ENCODE measurements at regions of chr2 and their contacts with region 1.

Region 1: DNA sequence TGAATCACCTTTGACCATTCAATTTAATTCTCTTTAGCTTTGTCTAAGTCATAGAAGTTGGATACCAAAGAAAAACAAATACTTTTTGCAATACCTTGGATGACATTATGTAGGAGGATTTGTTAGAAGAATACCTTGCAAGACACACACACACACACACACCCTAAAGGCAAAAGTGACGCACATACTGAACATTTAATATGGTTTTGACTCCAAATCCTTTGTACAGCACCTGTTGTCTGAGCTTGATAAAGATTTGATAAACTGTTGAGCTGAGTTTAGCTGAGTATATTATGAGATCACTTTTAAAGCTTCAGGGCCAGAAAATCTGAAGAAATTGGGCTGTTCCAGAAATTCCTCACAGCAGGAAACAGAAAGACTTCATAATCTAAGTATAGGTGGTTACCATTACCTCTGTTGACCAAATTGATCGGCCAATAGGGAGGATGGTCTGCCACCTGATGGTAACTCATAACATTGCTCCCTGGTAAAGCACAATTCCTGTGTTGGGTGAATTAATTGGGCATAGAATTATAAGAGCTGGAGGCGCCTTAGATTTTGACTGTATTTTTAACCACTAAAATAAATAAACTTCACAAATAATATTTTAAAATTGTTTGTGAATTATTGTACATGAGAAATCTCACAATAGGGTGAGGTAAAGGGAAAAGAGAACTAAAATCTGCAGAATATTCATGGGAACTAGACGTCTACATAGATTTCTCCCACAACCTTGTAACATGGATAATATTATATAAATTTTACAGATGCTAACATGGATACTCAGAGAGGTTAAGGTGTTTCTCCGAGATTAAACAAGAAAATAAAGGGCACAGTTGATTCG is 21.9 kb upstream of the RPIA start:
- DNase-seq: peak; percentile 55
- H3K4me3 ChIP-seq: no peak overlapping the region
- H3K27ac ChIP-seq: no peak overlapping the region
- H3K4me1 ChIP-seq: no peaks in the 10 kb centered on the region
- H3K27me3 ChIP-seq: peaks cover 5 to 9% of the 10 kb centered on the region in 2 experiments
- CTCF ChIP-seq: peak; percentile 40 to 47
- POLR2A ChIP-seq: no peak

Region 2: DNA sequence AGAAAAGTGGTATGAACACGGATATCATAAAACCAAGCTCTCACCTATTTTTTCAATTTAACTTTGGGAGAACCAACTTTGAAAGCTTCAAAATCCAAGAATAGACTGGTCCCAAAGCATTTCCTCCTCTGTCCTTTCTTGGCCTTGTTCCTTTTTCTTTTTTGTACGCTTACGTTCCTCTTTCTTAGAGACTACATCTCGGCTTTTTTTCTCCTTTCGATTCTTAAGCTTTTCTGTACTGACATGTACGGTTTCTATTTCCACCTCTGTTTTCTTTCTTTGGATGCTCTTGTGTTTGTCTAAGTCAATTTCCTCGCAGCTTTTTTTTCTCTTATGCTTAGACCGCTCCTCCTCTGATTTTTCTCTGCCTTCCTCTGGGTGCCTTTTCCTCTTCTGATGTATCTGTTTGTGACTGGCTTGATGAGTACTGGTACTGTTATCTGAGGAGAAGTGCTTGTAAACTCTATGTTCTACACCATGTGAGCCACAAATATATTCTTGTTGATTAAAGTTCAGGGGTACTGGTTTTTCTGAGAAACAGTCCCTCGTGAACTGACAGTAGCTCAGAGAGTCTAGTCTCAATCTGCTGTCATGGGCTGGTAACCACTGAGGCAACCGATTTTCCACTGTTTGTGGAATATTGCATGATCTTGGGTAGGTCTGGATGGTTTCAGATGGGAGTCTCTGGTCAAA is 641.8 kb before region 1 on chr2:
- CTCF ChIA-PET with region 1: no interaction called
- POLR2A ChIA-PET with region 1: no interaction called
- dilution Hi-C with region 1: no loop called
- intact Hi-C with region 1: no loop called
- DNase-seq: no peak
- H3K4me3 ChIP-seq: no peak overlapping the region
- H3K27ac ChIP-seq: no peak overlapping the region
- H3K4me1 ChIP-seq: no peaks in the 10 kb centered on the region
- H3K27me3 ChIP-seq: no peaks in the 10 kb centered on the region
- CTCF ChIP-seq: no peak
- POLR2A ChIP-seq: no peak

Region 3: DNA sequence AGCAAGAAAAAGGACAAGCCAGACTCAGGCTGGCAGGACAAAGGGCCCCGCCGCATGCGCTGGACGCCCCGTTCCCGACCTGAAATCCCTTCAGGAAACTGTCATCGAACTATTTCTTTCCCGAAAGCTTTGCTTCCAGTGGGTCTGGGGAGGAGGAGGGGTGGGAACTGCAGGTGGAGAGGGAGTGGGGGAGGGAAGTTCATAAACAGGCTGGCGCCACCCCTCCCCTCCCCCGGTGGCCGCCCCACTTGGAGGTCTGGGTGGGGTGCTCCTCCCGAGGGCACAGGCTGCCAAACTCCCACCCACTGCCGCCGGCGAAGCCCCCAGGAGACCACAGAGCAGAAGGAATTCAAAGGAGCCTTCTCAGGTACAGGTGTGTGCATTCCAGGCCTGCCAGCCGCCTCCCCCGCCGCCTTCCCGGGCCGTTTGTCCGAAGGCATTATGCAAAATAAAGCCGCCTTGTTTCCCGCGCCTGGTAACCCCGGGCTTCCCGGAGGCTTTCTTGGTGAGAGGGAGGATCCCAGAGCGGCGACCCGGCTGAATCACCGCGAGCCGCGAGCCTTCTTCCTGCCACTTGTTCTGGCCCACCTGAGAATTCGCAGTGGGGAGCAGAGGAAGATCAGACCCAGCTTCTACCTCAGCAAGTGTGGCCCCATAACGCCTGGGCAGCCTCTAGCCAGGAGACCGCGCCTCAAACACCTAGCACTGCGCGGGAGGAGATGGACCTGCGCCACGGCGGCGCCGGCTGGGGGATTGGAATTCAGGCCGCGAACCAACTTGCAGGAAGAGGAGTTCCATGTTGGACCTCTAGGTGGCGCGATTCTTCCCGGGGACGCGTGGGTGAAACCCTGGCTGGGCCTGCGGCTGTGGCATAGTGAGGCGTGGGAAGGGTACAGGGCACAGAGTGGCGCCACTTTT is 319.0 kb before region 1 on chr2:
- CTCF ChIA-PET with region 1: no interaction called
- POLR2A ChIA-PET with region 1: no interaction called
- dilution Hi-C with region 1: no loop called
- intact Hi-C with region 1: loop called (anchors 5 kb)
- DNase-seq: peak; percentile 19
- H3K4me3 ChIP-seq: no peak overlapping the region
- H3K27ac ChIP-seq: no peak overlapping the region
- H3K4me1 ChIP-seq: no peaks in the 10 kb centered on the region
- H3K27me3 ChIP-seq: no peaks in the 10 kb centered on the region
- CTCF ChIP-seq: peak; percentile 46 to 68
- POLR2A ChIP-seq: no peak

Region 4: GRCh38 chr2:88590998-88591613 is 78.5 kb before region 1 on chr2:
- CTCF ChIA-PET with region 1: interaction called, 378 read pairs
- POLR2A ChIA-PET with region 1: no interaction called
- dilution Hi-C with region 1: no loop called
- intact Hi-C with region 1: loop called (anchors 1 kb)
- DNase-seq: peak; percentile 77
- H3K4me3 ChIP-seq: no peak overlapping the region
- H3K27ac ChIP-seq: no peak overlapping the region
- H3K4me1 ChIP-seq: no peaks in the 10 kb centered on the region
- H3K27me3 ChIP-seq: no peaks in the 10 kb centered on the region
- CTCF ChIP-seq: peak; percentile 63
- POLR2A ChIP-seq: no peak

Region 5: GRCh38 chr2:88606371-88607030 is 63.1 kb before region 1 on chr2:
- CTCF ChIA-PET with region 1: interaction called, 22 read pairs
- POLR2A ChIA-PET with region 1: no interaction called
- dilution Hi-C with region 1: no loop called
- intact Hi-C with region 1: no loop called
- DNase-seq: no peak
- H3K4me3 ChIP-seq: no peak overlapping the region
- H3K27ac ChIP-seq: no peak overlapping the region
- H3K4me1 ChIP-seq: peaks cover 13% of the 10 kb centered on the region
- H3K27me3 ChIP-seq: no peaks in the 10 kb centered on the region
- CTCF ChIP-seq: no peak
- POLR2A ChIP-seq: no peak

Region 6: GRCh38 chr2:88659538-88659916 is 10.1 kb before region 1 on chr2:
- CTCF ChIA-PET with region 1: interaction called, 49 read pairs
- POLR2A ChIA-PET with region 1: no interaction called
- dilution Hi-C with region 1: no loop called
- intact Hi-C with region 1: no loop called
- DNase-seq: peak; percentile 88
- H3K4me3 ChIP-seq: peak overlapping the region in 1 of 3 experiments; percentile 4
- H3K27ac ChIP-seq: peak overlapping the region; percentile 37
- H3K4me1 ChIP-seq: peaks cover 11% of the 10 kb centered on the region
- H3K27me3 ChIP-seq: no peaks in the 10 kb centered on the region
- CTCF ChIP-seq: no peak
- POLR2A ChIP-seq: no peak

Region 7: DNA sequence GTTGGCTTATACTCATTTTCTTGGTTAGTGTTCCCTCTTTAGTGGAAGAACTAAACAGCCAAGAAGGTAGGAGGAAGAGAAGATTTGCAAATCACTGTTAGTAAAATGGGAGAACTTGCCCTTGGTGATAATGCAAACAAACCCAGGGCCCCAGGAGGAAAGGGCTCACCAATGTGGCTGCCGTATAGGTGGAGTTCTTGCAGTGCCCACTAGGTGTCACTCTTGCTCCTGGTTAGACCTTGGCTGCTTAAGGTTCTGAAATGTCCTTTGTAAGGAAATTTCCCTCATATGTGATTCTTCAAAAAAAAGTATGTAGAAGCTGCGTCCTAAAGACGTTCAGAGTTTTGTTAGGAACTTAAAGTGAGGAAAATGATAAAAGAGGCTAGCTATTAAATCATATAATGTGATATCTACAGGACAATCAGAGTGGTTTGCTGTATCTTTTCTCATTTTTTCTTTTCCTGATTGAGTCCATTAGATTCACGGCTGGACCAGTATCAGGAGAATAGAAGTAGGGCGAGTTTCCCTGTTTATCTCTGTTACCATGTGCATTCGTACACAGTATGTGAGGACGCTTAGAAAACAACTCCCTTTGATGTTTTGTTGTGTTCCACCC is 70.5 kb after region 1 on chr2:
- CTCF ChIA-PET with region 1: interaction called, 10 read pairs
- POLR2A ChIA-PET with region 1: no interaction called
- dilution Hi-C with region 1: no loop called
- intact Hi-C with region 1: no loop called
- DNase-seq: peak; percentile 82
- H3K4me3 ChIP-seq: no peak overlapping the region
- H3K27ac ChIP-seq: peak overlapping the region; percentile 16
- H3K4me1 ChIP-seq: peaks cover 31% of the 10 kb centered on the region
- H3K27me3 ChIP-seq: no peaks in the 10 kb centered on the region
- CTCF ChIP-seq: peak; percentile 85 to 87
- POLR2A ChIP-seq: no peak

Region 8: DNA sequence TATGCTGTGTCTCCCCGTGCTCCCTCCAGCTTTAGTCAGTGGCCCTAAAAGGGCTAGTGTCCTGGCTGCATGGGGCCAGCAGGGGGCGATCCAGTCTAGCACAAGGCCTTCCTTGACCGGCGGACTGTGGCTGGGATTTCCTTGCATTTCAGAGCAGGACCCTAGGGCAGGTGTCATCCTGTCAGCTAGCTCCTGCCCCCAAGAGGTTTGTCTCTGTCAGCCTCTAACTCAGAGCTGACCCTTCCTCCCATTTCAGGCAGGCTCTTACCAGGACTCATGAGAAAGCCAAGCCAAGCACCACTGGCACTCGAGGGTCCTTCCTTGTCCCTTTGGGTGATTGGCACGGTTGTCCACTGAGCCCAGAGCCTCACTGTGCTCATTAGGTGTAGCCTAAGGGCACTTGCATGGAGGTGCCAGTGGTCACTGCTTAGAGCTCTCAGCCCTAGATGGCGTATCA is 162.2 kb after region 1 on chr2:
- CTCF ChIA-PET with region 1: no interaction called
- POLR2A ChIA-PET with region 1: no interaction called
- dilution Hi-C with region 1: no loop called
- intact Hi-C with region 1: no loop called
- DNase-seq: peak; percentile 23
- H3K4me3 ChIP-seq: no peak overlapping the region
- H3K27ac ChIP-seq: no peak overlapping the region
- H3K4me1 ChIP-seq: peaks cover 22% of the 10 kb centered on the region
- H3K27me3 ChIP-seq: no peaks in the 10 kb centered on the region
- CTCF ChIP-seq: peak; percentile 56 to 78
- POLR2A ChIP-seq: no peak

Measured in endothelial cell of umbilical vein (primary cell).